CD8-positive, alpha-beta memory T cell (primary cell): ENCODE measurements at regions of chr1 and their contacts with region 1.

Region 1: DNA sequence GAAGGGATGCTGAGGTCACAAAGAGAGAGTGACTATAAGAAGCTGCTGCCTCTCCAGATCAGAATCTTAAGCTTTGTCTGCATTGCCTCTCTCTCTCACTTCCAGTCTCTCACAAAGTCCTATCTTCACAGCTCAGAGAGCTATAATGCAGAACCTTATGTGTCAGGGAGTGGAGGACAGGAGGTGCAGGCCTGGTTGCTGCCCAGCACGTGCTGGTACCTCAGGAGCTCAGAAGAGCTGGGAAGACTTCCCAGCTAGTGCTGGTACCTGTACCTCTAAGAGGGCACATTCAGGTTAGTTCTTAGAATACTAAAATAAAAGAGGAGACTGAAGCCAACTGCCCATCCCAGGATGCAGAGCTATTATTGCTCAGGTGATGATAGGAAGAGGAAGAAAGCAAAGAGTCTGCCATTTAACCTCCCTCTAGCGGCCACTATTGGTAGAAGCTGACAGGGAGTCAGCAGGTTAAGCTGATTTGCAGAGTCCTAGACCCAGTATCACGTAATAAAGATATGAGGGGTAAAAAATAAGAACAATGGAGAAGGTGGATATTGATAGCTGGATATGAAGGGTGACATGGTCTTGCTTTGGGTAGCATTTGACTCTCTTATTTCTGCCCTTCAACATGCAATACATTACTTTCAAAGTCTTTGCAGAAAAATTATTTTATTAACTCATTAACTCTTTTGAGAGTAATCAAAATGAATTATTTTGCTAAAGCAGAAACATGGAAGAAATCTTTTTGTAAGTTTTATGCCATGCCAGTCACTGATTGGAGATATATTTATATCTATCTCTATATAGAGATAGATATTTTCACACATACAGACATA is 138.1 kb upstream of the HMCN1 start:
- DNase-seq: peak; percentile 24 to 72 (median 47)
- H3K4me3 ChIP-seq: no peak overlapping the region
- H3K4me3 Mint-ChIP-seq: no peak overlapping the region
- H3K27ac ChIP-seq: no peak overlapping the region
- H3K27ac Mint-ChIP-seq: peak overlapping the region in 6 of 8 donors; percentile 36 to 70 (median 54)
- H3K4me1 ChIP-seq: peaks cover 13% of the 10 kb centered on the region
- H3K4me1 Mint-ChIP-seq: peaks cover 19 to 34% (median 32%) of the 10 kb centered on the region in 3 donors
- H3K27me3 ChIP-seq: no peaks in the 10 kb centered on the region
- H3K27me3 Mint-ChIP-seq: no peaks in the 10 kb centered on the region

Region 2: GRCh38 chr1:185546029-185546428 is 50.0 kb before region 1 on chr1:
- CTCF ChIA-PET with region 1: interaction called, 12 read pairs
- POLR2A ChIA-PET with region 1: no interaction called
- DNase-seq: no peak
- H3K4me3 ChIP-seq: no peak overlapping the region
- H3K4me3 Mint-ChIP-seq: no peak overlapping the region
- H3K27ac ChIP-seq: no peak overlapping the region
- H3K27ac Mint-ChIP-seq: peak overlapping the region in 1 of 8 donors; percentile 57
- H3K4me1 ChIP-seq: no peaks in the 10 kb centered on the region
- H3K4me1 Mint-ChIP-seq: no peaks in the 10 kb centered on the region
- H3K27me3 ChIP-seq: no peaks in the 10 kb centered on the region
- H3K27me3 Mint-ChIP-seq: no peaks in the 10 kb centered on the region

Region 3: GRCh38 chr1:185566995-185567394 is 29.1 kb before region 1 on chr1:
- CTCF ChIA-PET with region 1: interaction called, 12 read pairs
- POLR2A ChIA-PET with region 1: interaction called, 12 read pairs
- DNase-seq: peak; percentile 7 to 91 (median 77)
- H3K4me3 ChIP-seq: peak overlapping the region; percentile 10
- H3K4me3 Mint-ChIP-seq: peak overlapping the region; percentile 40 to 74 (median 70)
- H3K27ac ChIP-seq: peak overlapping the region; percentile 74
- H3K27ac Mint-ChIP-seq: peak overlapping the region; percentile 96 to 100 (median 98)
- H3K4me1 ChIP-seq: peaks cover 54% of the 10 kb centered on the region
- H3K4me1 Mint-ChIP-seq: peaks cover 67 to 88% (median 87%) of the 10 kb centered on the region in 3 donors
- H3K27me3 ChIP-seq: no peaks in the 10 kb centered on the region
- H3K27me3 Mint-ChIP-seq: no peaks in the 10 kb centered on the region

Region 4: DNA sequence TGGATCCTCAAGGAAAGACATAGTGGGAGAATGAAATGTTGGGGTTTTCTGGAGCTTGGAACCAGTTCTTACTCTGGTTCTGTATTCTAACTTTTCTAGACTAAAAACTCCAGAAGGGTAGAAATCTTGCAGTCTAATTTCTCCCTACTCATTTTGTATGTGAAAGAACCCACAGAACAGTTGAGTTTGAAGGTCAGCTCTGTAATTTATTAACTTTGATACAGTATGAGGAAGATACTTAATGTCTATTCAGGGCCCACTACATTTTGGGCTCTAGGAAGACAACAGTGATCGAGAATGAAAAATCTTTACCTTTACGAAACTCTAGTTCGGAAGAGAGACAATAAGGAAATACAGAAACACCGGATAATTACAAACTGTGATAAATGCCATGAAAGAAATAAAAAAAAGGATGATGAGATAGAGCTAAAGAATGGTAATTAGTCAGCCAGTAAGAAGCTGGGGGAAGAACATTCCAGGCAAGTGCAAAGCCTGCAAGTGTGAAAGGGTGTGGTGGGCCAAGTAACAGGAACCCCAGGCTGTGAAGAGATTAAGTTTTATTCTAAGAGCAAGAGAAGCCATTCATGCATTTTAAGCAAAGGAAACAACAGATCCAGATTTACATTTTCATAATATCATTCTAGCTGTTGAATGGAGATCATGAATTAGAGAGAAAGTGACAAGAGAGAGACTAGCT is 21.8 kb before region 1 on chr1:
- CTCF ChIA-PET with region 1: interaction called, 10 read pairs
- POLR2A ChIA-PET with region 1: no interaction called
- DNase-seq: no peak
- H3K4me3 ChIP-seq: no peak overlapping the region
- H3K4me3 Mint-ChIP-seq: no peak overlapping the region
- H3K27ac ChIP-seq: no peak overlapping the region
- H3K27ac Mint-ChIP-seq: no peak overlapping the region
- H3K4me1 ChIP-seq: peaks cover 8% of the 10 kb centered on the region
- H3K4me1 Mint-ChIP-seq: peaks cover 10 to 25% (median 20%) of the 10 kb centered on the region in 3 donors
- H3K27me3 ChIP-seq: no peaks in the 10 kb centered on the region
- H3K27me3 Mint-ChIP-seq: no peaks in the 10 kb centered on the region

Region 5: DNA sequence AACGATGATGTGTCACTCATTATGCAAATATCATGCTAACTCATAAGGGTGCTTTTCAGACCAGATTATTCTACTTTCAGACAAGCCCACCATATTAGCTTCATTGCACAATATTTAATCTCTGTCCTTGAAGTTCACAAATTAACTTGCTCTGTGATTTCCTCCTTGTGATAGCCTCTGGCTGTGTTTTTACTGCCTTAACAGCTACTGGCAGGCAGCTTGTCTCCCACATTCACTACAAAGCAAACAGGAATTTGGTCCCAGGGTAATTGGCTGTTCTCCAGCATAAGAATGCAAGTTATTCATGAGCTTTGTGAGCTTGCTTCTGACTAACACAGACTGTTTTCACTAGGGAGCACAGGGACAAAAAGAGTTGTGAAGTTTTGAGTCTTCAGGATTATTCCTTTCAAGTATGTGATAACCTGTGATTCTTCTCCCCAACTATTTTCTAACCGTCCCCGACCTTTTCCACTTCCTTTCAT is 50.2 kb after region 1 on chr1:
- CTCF ChIA-PET with region 1: no interaction called
- POLR2A ChIA-PET with region 1: no interaction called
- DNase-seq: no peak
- H3K4me3 ChIP-seq: no peak overlapping the region
- H3K4me3 Mint-ChIP-seq: no peak overlapping the region
- H3K27ac ChIP-seq: no peak overlapping the region
- H3K27ac Mint-ChIP-seq: peak overlapping the region in 2 of 8 donors; percentile 36 to 51
- H3K4me1 ChIP-seq: peaks cover 25% of the 10 kb centered on the region
- H3K4me1 Mint-ChIP-seq: peaks cover 19 to 42% (median 30%) of the 10 kb centered on the region in 3 donors
- H3K27me3 ChIP-seq: no peaks in the 10 kb centered on the region
- H3K27me3 Mint-ChIP-seq: peaks cover 0 to 4% of the 10 kb centered on the region in 2 donors